ENCODE measurements at regions of chr16 and their contacts with region 1.

Region 1: DNA sequence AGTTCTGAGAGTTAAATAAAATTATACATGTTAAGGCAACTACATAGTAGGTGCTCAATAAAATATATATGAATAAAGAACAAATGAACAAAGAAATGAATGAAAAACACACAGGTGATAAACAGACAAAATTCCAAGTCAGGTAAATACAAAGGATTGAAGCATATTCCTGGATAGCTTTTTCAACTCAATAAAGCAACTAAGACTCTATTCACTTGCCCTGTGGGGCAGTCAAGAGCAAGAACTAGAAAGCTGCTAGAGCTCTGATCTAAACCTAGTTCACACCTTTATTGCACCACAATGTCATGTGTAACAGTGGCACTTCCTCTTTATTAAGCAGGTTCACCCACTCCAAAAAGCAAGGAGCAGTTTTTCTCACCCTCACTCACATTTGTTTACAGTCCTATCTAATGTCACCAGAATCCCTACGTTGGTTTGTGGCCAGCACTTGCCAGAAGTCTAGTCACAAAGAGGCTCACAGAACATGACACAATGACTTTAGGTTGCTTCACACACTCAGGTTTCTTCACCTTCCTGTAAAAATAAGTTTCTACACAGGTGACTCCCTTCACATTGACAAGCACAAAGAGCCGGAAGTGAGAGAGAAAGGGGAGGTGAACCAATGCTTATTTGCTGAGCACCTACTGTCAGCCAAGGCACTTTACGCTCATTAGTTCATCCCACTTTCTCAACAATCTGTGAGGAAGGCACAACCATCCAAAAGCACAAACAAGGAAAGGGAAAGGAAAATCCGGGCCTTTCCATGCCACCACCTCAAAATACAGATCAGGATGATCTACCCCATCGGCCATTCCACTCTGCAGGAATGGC is 70.8 kb downstream of the XPO6 start:
- DNase-seq: peak; percentile 83
- H3K4me3 Mint-ChIP-seq: peak overlapping the region; percentile 75
- H3K27ac Mint-ChIP-seq: peak overlapping the region; percentile 100
- H3K4me1 Mint-ChIP-seq: peaks cover 84% of the 10 kb centered on the region
- H3K27me3 Mint-ChIP-seq: no peaks in the 10 kb centered on the region

Region 2: DNA sequence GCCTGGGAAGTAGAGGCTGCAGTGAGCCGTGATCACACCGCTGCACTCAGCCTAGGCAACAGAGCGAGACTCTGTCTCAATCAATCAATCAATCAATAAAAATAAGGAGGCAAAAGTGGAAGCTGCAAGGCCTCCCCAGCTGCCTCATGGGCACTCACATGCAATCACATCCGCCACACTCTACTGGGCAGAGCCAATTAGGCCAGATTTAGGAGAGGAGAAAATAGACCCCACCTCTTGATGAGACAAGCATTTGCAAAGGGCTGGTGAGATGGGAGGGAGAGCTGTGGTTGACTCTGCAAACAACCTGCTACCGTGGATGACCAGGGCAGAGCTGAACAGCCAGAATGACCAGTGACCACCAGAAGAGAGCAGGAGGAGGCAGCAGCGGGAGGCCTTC is 62.7 kb before region 1 on chr16:
- CTCF ChIA-PET with region 1: no interaction called
- POLR2A ChIA-PET with region 1: no interaction called
- DNase-seq: no peak
- H3K4me3 Mint-ChIP-seq: no peak overlapping the region
- H3K27ac Mint-ChIP-seq: no peak overlapping the region
- H3K4me1 Mint-ChIP-seq: no peaks in the 10 kb centered on the region
- H3K27me3 Mint-ChIP-seq: no peaks in the 10 kb centered on the region

Region 3: DNA sequence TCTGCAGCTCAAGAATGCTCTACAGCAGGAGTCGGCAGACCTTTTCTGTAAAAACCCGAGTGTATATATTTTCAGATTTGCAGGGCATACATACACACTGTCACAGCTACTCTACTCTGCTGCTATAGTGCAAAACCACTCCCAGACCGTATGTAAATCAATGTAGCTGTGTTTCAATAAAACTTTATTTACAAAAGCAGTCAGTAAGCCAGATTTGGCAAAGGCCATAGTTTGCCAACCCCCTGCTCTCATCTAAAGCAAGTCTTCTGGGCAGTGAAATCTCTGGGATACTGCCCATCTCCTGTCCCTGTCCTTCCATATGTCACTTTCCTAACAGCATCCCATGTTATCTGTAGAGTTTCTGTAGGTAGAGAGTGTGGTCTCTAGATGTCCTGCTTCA is 20.2 kb before region 1 on chr16:
- CTCF ChIA-PET with region 1: no interaction called
- POLR2A ChIA-PET with region 1: no interaction called
- DNase-seq: no peak
- H3K4me3 Mint-ChIP-seq: no peak overlapping the region
- H3K27ac Mint-ChIP-seq: no peak overlapping the region
- H3K4me1 Mint-ChIP-seq: no peaks in the 10 kb centered on the region
- H3K27me3 Mint-ChIP-seq: no peaks in the 10 kb centered on the region

Region 4: DNA sequence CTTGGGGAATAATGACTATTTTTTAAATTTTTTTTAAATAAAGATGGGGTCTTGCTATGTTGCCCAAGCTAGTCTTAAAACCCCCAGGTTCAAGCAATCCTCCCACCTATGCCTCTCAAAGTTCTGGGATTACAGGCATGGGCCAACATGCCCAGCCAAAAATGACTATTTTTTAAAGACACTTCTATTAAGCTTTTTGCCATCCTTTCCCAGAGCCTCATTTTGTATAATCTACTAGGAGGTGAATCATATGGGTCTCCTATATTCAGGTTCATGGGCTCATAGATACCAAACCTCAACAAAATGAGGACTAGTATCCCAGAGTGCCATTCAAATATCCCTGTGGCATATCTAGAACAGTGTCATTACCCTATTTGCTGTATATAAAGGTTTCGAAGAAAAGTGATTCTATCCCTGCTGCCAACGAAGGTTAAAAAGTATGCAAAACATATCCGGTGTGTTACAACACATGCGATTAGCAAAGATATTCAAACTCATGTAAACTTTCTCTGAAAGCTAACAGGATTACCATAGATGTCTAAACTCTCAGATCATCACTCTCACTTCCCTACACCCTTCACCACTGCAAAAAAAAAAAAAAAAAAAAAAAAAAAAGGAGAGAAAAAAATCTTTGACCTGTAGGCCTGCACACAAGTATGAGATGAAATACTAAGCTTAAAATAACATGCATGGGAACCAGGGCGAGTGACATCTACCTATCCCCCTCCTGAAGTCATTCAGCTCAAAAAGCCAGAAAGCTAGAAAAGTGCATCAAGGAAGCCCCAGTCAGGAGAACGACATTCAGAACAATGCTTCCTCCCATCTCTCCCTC is 47.3 kb after region 1 on chr16:
- CTCF ChIA-PET with region 1: interaction called, 6 read pairs
- POLR2A ChIA-PET with region 1: interaction called, 56 read pairs
- DNase-seq: no peak
- H3K4me3 Mint-ChIP-seq: peak overlapping the region; percentile 58
- H3K27ac Mint-ChIP-seq: peak overlapping the region; percentile 83
- H3K4me1 Mint-ChIP-seq: peaks cover 87% of the 10 kb centered on the region
- H3K27me3 Mint-ChIP-seq: no peaks in the 10 kb centered on the region

Region 5: DNA sequence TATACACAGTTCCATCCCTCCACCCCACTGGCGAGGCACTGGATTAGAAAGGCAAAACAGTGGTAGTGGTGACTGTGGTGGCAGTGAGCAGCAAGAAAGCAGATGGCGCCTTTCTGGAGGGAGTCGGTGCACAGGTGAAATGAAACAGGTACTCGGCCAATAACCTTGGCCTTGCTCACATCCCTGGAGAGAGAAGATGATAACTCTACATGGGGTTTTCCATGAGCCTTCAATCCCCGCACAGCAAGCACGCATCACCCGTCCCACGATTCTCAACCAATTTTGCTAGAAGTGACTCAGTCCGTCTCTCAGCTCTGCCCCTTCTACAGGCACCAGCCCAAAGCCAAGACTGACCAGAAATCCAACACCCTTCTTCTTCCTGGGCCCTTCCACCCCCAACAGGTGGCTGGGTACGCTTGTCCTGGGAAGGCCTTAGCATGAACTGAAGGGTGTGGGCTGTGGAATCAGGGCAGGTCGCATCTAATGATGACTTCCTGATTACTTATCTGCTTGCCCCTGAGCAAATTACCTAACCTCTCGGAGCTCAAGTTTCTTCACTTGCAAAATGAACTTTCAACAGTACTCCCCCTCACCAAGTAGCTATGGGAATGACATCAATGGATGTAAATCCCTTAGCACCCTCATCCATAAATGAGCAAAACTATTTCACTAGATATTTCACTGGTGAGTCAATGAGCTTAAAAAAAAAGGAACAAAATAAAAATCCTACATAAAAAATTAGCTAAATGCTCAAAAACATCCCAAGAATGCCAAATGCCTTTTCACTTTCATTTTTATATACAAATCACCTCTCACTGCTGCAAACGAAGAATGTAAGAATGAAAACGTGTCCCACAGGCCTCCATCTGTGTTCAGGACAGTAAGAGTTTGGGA is 52.8 kb after region 1 on chr16:
- CTCF ChIA-PET with region 1: interaction called, 4 read pairs
- POLR2A ChIA-PET with region 1: interaction called, 56 read pairs
- DNase-seq: peak; percentile 45
- H3K4me3 Mint-ChIP-seq: peak overlapping the region; percentile 75
- H3K27ac Mint-ChIP-seq: peak overlapping the region; percentile 96
- H3K4me1 Mint-ChIP-seq: peaks cover 78% of the 10 kb centered on the region
- H3K27me3 Mint-ChIP-seq: no peaks in the 10 kb centered on the region

Region 6: GRCh38 chr16:28211712-28212534 is 70.9 kb after region 1 on chr16 and contains the start of gene XPO6:
- CTCF ChIA-PET with region 1: interaction called, 85 read pairs
- POLR2A ChIA-PET with region 1: interaction called, 123 read pairs
- DNase-seq: peak; percentile 99
- H3K4me3 Mint-ChIP-seq: peak within 1 kb of the TSS; percentile 76
- H3K27ac Mint-ChIP-seq: peak within 1 kb of the TSS; percentile 95
- H3K4me1 Mint-ChIP-seq: peaks cover 36% of the 10 kb centered on the region
- H3K27me3 Mint-ChIP-seq: no peaks in the 10 kb centered on the region
- total RNA-seq, gene XPO6: 218 to 223 TPM

Region 7: GRCh38 chr16:28218104-28218503 is 77.1 kb after region 1 on chr16:
- CTCF ChIA-PET with region 1: interaction called, 85 read pairs
- POLR2A ChIA-PET with region 1: interaction called, 123 read pairs
- DNase-seq: peak; percentile 68
- H3K4me3 Mint-ChIP-seq: no peak overlapping the region
- H3K27ac Mint-ChIP-seq: no peak overlapping the region
- H3K4me1 Mint-ChIP-seq: peaks cover 5% of the 10 kb centered on the region
- H3K27me3 Mint-ChIP-seq: no peaks in the 10 kb centered on the region